A673 (cell line): ENCODE measurements at regions of chr1 and their contacts with region 1.

Region 1: GRCh38 chr1:161117759-161118581 is at the starts of genes NIT1 and PFDN2:
- DNase-seq: peak; percentile 93
- H3K4me3 ChIP-seq: peak within 1 kb of the TSS; percentile 86
- H3K27ac ChIP-seq: peak within 1 kb of the TSS; percentile 93
- H3K4me1 ChIP-seq: peaks cover 12% of the 10 kb centered on the region
- H3K27me3 ChIP-seq: no peaks in the 10 kb centered on the region
- CTCF ChIP-seq: no peak
- total RNA-seq, gene NIT1: 29.3 and 40.3 TPM in 2 replicates
- total RNA-seq, gene PFDN2: 131 and 133 TPM in 2 replicates

Region 2: DNA sequence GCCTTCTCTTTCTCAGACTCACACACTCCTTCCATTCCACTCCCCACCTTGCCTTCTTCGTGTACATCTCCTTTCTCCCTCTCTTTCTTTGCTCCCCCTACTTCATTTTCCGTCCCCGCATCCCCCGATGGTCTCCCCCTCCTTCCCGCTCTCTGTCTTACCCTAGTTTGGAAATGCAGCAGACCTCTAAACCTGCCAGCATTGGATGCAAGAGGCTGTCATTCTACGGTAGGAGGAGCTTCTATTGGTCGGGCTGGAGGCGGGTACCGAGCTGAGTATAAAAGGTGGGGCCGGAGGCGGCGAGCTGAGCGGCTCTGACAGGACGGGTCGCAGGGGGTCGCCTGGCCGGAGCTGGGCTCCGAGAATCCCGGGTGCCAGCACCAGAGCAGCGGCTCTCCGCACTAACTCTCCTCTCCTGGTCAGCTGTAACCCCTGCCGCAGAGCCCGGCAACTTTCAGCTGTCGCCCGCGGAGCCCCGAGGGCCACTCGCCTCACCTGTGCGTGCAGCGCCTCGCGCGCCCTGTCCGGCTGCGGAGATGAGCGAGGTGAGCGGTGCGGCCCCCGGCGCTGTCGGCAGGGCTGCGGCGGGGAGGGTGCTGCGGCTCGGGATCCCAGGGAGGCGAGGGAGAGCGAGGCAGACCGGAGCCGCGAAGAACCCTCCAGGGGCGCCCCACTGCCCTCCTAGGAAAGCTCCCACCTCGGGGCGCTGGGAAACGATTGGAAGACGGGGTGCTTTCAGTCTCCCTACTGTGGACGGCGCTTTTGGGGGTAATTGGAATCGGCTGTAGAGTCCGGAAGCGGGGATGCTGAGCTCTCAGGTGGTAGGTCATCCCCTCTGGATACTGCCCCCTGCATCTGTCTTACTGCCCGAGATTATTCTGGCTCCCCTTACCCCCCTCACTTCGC is 140.7 kb after region 1 on chr1 and contains the start of gene PCP4L1:
- CTCF ChIA-PET with region 1: no interaction called
- POLR2A ChIA-PET with region 1: interaction called, 21 read pairs
- intact Hi-C with region 1: no loop called
- DNase-seq: peak; percentile 68
- H3K4me3 ChIP-seq: peak within 1 kb of the TSS; percentile 48
- H3K27ac ChIP-seq: no peak within 1 kb of the TSS
- H3K4me1 ChIP-seq: peaks cover 13% of the 10 kb centered on the region
- H3K27me3 ChIP-seq: peaks cover 25% of the 10 kb centered on the region
- CTCF ChIP-seq: no peak
- total RNA-seq, gene PCP4L1: not detected in 2 replicates

Region 3: GRCh38 chr1:161389691-161390558 is 272.0 kb after region 1 on chr1:
- CTCF ChIA-PET with region 1: no interaction called
- POLR2A ChIA-PET with region 1: interaction called, 16 read pairs
- intact Hi-C with region 1: no loop called
- DNase-seq: peak; percentile 96
- H3K4me3 ChIP-seq: peak overlapping the region; percentile 65
- H3K27ac ChIP-seq: peak overlapping the region; percentile 82
- H3K4me1 ChIP-seq: peaks cover 6% of the 10 kb centered on the region
- H3K27me3 ChIP-seq: no peaks in the 10 kb centered on the region
- CTCF ChIP-seq: no peak